CD14-positive monocyte (primary cell): ENCODE measurements at regions of chr6 and their contacts with region 1.

Region 1: GRCh38 chr6:42661540-42662153 is 60.8 kb downstream of the PRPH2 start:
- DNase-seq: peak; percentile 58 to 76 (median 68)
- H3K4me3 ChIP-seq: no peak overlapping the region
- H3K4me3 Mint-ChIP-seq: no peak overlapping the region
- H3K27ac ChIP-seq: no peak overlapping the region
- H3K27ac Mint-ChIP-seq: peak overlapping the region in 3 of 7 donors; percentile 1 to 45 (median 22)
- H3K4me1 ChIP-seq: no peaks in the 10 kb centered on the region
- H3K4me1 Mint-ChIP-seq: peaks cover 2% of the 10 kb centered on the region
- H3K27me3 ChIP-seq: no peaks in the 10 kb centered on the region
- H3K27me3 Mint-ChIP-seq: no peaks in the 10 kb centered on the region
- CTCF ChIP-seq: peak; percentile 89

Region 2: DNA sequence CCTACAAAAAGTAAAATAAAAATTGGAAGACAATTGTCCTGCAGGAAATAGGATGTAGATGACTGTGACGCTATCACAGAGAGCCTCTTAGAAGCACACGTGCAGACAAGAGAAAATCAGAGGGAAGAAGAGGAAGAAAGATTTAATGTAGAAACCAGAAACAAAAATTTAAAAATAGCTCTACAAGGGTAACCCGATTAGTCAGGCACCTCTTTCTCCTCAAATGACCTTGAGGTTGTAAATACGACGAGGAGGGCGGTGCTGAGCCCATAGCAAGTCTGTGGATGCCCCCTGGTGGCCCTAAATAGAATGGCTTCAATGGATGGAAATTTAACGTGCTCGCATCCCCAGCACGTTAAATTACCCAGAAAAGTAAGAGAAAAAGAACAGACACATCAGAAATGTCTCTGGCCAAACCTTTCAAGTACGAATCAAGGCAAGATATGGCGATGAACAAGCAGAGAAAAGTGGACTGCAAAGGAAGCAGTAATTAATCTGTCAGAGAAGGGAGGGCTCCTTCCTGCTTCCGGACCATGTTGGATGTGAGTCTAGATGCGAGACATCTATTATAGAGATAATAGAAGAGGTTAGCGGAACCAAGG is 64.9 kb after region 1 on chr6:
- intact Hi-C with region 1: loop called (anchors 2 to 5 kb)
- DNase-seq: peak; percentile 80 to 89 (median 84)
- H3K4me3 ChIP-seq: peak overlapping the region; percentile 55 to 88 (median 77)
- H3K4me3 Mint-ChIP-seq: peak overlapping the region; percentile 95 to 99
- H3K27ac ChIP-seq: peak overlapping the region in 1 of 2 donors; percentile 50
- H3K27ac Mint-ChIP-seq: peak overlapping the region in 5 of 7 donors; percentile 74 to 87 (median 84)
- H3K4me1 ChIP-seq: peaks cover 5 to 16% of the 10 kb centered on the region in 2 donors
- H3K4me1 Mint-ChIP-seq: peaks cover 18% of the 10 kb centered on the region
- H3K27me3 ChIP-seq: no peaks in the 10 kb centered on the region
- H3K27me3 Mint-ChIP-seq: peaks cover 2 to 11% (median 7%) of the 10 kb centered on the region in 3 donors
- CTCF ChIP-seq: peak; percentile 95

Region 3: GRCh38 chr6:42879372-42880239 is 218.0 kb after region 1 on chr6 and contains the start of gene RPL7L1:
- intact Hi-C with region 1: loop called (anchors 5 kb)
- DNase-seq: peak; percentile 76 to 87 (median 80)
- H3K4me3 ChIP-seq: peak within 1 kb of the TSS; percentile 53 to 98 (median 89)
- H3K4me3 Mint-ChIP-seq: peak within 1 kb of the TSS; percentile 98 to 99
- H3K27ac ChIP-seq: peak within 1 kb of the TSS; percentile 63 to 98
- H3K27ac Mint-ChIP-seq: peak within 1 kb of the TSS; percentile 98 to 100 (median 100)
- H3K4me1 ChIP-seq: peaks cover 14 to 19% of the 10 kb centered on the region in 2 donors
- H3K4me1 Mint-ChIP-seq: peaks cover 16% of the 10 kb centered on the region
- H3K27me3 ChIP-seq: no peaks in the 10 kb centered on the region
- H3K27me3 Mint-ChIP-seq: peaks cover 0 to 2% (median 0%) of the 10 kb centered on the region in 3 donors
- CTCF ChIP-seq: no peak
- polyA plus RNA-seq, gene RPL7L1: 7.6 to 35.5 (median 29.7) TPM

Region 4: GRCh38 chr6:42890311-42891198 is 228.9 kb after region 1 on chr6:
- intact Hi-C with region 1: loop called (anchors 5 kb)
- DNase-seq: peak; percentile 85 to 87 (median 87)
- H3K4me3 ChIP-seq: peak overlapping the region; percentile 91 to 98 (median 93)
- H3K4me3 Mint-ChIP-seq: peak overlapping the region; percentile 94 to 97
- H3K27ac ChIP-seq: peak overlapping the region; percentile 85 to 91
- H3K27ac Mint-ChIP-seq: peak overlapping the region; percentile 87 to 95 (median 93)
- H3K4me1 ChIP-seq: peaks cover 27 to 36% of the 10 kb centered on the region in 2 donors
- H3K4me1 Mint-ChIP-seq: peaks cover 30% of the 10 kb centered on the region
- H3K27me3 ChIP-seq: no peaks in the 10 kb centered on the region
- H3K27me3 Mint-ChIP-seq: no peaks in the 10 kb centered on the region
- CTCF ChIP-seq: no peak

Region 5: DNA sequence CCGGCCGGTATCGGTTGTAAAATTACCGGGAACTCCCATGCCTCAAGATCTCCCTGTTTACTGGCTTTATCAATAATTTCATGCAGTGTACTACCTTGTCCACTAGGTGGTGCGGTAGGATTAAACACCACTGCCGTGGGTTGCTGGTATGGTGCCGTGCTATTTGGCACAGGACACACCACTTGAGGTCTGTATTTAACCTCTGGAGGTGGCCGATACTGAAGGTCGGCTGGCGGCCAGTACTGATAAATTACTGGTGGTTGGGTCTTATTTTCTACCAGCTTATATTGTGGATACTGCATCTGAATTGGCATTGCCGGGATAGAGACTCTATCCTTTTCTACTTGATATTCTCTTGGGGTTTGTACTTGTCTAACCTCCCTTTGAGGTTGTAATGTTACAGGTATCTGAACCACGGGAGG is 239.9 kb after region 1 on chr6:
- intact Hi-C with region 1: loop called in 1 of 2 experiments (anchors 5 kb)
- DNase-seq: peak; percentile 72 to 87 (median 82)
- H3K4me3 ChIP-seq: no peak overlapping the region
- H3K4me3 Mint-ChIP-seq: peak overlapping the region in 1 of 2 donors; percentile 35
- H3K27ac ChIP-seq: no peak overlapping the region
- H3K27ac Mint-ChIP-seq: no peak overlapping the region
- H3K4me1 ChIP-seq: peaks cover 0 to 14% of the 10 kb centered on the region in 2 donors
- H3K4me1 Mint-ChIP-seq: peaks cover 21% of the 10 kb centered on the region
- H3K27me3 ChIP-seq: no peaks in the 10 kb centered on the region
- H3K27me3 Mint-ChIP-seq: peaks cover 0 to 1% (median 0%) of the 10 kb centered on the region in 3 donors
- CTCF ChIP-seq: peak; percentile 81